ENCODE measurements at regions of chr18 and their contacts with region 1.

Region 1: DNA sequence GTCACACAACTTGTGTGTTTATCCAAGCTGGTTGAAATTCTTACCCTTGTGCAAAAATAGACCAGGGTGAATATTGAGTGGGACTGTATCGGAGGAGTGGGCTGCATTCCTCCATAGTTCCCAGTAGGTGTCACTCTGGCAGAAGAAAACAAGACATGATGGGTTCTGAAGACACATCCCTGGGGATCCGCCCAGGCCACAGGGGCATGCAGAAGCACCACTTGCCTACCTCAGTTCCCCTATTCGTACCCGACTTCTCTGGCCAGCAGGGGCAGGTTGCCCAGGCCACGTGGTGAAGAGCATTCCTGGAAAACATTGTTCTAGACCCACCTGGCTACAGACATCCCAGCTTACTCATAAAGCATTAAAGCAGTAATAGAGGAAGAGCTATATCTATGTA is 168.2 kb downstream of the FAM210A start:
- DNase-seq: no peak
- H3K4me3 Mint-ChIP-seq: no peak overlapping the region
- H3K27ac Mint-ChIP-seq: peak overlapping the region; percentile 27
- H3K4me1 Mint-ChIP-seq: peaks cover 34% of the 10 kb centered on the region
- H3K27me3 Mint-ChIP-seq: no peaks in the 10 kb centered on the region

Region 2: DNA sequence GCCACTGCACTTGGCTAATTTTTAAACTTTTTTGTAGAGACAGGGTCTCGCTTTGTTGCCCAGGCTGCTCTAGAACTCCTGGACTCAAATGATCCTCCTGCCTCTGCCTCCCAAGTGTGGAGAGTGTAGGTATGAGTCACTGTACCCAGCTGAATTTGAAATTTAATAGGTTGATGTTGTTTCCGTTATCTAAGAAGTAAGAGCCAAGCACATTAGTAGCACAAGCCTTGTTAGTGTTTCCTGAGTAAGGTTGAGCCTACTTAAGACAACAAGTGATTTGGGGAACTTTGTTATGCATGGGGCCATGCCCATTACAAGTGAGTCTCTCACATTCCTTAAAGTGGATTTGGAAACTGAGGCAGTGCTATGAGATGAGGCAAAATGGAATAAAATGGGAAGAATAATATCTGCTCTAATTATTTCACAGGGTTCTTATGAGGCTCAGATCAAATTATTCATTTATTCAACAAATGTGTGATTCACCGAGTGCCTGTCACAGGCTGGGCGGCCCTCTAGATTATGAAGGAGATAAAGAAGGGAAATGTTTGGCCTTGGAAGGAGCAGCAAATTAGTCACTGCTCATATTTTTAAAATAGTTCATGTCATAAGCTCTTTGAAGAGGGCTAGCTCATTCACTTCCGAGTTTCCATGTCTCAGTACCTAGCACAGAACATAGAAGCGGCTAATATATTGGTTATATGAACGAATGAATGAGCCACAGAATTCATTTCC is 122.4 kb before region 1 on chr18:
- intact Hi-C with region 1: loop called (anchors 1 kb)
- DNase-seq: no peak
- H3K4me3 Mint-ChIP-seq: no peak overlapping the region
- H3K27ac Mint-ChIP-seq: no peak overlapping the region
- H3K4me1 Mint-ChIP-seq: peaks cover 68% of the 10 kb centered on the region
- H3K27me3 Mint-ChIP-seq: no peaks in the 10 kb centered on the region

Region 3: DNA sequence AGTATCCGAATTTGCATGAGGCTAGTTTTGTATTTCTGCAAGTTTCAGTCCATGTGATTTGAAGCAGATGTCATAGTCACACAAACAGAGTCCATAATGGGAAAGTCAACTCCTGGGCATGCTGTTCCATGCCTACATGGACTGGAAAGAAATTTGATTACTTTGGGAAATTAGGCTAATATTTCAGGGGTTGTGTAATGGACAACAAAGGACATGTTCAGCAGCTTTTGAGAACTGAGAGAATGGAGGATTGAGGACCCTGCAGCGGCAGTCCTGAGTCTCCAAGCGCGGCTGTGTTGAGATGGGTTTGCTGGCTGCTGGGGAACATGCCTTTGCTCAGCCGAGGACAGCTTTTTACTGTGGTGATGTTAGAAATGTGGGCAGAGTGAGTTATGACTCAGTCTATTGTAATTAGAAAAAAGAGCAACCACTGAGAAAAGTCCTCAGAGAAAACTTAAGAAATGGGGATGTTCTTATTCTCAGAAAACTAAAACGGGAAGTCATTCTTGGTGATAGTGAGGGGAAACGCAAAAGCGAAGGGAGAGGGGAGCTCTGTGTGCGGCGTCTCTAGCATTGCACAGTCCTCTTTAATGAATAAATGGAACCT is 19.1 kb after region 1 on chr18:
- intact Hi-C with region 1: loop called (anchors 1 kb)
- DNase-seq: peak; percentile 41
- H3K4me3 Mint-ChIP-seq: peak overlapping the region; percentile 67
- H3K27ac Mint-ChIP-seq: peak overlapping the region; percentile 87
- H3K4me1 Mint-ChIP-seq: peaks cover 56% of the 10 kb centered on the region
- H3K27me3 Mint-ChIP-seq: no peaks in the 10 kb centered on the region

Region 4: DNA sequence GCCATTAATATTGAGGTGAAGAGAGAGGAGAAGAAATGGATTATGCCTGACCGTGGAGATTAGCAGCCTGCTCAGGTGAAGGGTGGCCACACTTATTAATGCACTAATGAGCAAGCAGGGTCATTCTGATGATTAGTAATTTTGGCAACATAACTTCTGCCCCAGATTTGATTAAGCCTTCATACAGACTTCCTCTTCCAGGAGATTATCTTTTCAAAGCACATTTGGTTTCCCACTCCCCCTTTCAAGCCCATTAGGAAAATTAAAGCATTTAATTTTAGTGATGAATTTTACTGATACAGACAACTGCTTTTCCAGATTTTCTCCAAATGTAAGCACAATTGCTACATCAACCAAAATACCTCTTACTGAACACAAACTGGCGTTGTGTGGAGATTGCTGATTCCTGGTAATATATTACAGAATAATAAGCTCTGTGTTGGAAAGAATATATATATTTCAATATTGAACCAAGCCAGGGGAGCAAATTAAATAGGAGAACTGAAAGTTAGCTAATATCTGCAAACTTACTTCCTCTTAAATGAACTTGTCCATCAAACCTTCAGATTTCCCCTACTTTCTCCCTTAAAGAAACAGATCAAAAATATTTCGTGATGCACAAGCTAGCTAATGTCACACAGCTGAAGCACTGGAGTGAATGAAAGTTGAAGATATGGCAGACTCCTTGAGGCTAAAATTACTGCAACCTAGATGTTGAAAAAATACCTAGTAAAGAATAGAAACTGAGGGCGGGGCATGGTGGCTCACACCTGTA is 27.4 kb after region 1 on chr18:
- intact Hi-C with region 1: loop called (anchors 1 kb)
- DNase-seq: no peak
- H3K4me3 Mint-ChIP-seq: no peak overlapping the region
- H3K27ac Mint-ChIP-seq: no peak overlapping the region
- H3K4me1 Mint-ChIP-seq: peaks cover 55% of the 10 kb centered on the region
- H3K27me3 Mint-ChIP-seq: no peaks in the 10 kb centered on the region

Region 5: GRCh38 chr18:13629841-13630715 is 72.0 kb after region 1 on chr18:
- intact Hi-C with region 1: loop called (anchors 1 kb)
- DNase-seq: no peak
- H3K4me3 Mint-ChIP-seq: no peak overlapping the region
- H3K27ac Mint-ChIP-seq: no peak overlapping the region
- H3K4me1 Mint-ChIP-seq: peaks cover 15% of the 10 kb centered on the region
- H3K27me3 Mint-ChIP-seq: no peaks in the 10 kb centered on the region

Region 6: DNA sequence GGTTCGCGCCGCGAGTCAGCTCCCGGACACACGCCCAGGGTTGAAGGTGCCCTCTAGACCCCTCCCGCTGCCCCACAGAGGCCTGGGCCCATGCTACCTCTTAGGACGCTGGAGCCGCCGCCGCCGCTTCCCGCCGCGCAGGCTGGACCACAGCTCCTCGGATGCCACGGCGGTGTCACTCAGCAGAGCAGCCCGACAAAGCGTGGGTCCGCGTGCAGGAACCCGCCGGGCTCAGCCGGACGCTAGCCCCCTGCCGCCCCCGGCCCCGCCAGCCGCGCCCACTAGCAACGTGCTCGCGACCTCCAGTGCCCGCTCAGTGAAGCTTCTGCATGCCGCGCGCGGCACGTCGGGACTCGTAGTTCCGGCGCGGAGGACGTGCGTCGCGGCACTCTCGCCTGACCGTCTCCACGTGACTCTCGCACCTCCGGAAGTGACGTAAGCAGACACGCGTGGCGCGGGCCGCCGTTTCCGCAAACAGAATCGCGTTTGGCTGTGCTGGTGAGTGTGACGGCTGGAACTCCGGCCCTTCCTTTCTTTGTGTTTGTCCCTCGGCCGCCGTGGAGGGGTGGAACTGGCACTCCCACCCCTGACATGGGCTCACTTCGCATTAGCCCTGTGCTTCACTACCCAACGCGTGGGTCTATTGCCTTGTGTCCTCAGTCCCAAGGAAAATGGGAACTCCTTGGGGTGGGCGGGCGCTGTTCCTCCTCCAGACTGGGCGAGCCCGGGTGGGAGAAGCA is 168.3 kb after region 1 on chr18 and contains the starts of genes FAM210A and RNMT:
- intact Hi-C with region 1: loop called (anchors 1 kb)
- DNase-seq: peak; percentile 94
- H3K4me3 Mint-ChIP-seq: peak within 1 kb of the TSS; percentile 93
- H3K27ac Mint-ChIP-seq: peak within 1 kb of the TSS; percentile 86
- H3K4me1 Mint-ChIP-seq: peaks cover 72% of the 10 kb centered on the region
- H3K27me3 Mint-ChIP-seq: no peaks in the 10 kb centered on the region
- total RNA-seq, gene FAM210A: 27.7 and 29.5 TPM in 2 replicates
- total RNA-seq, gene RNMT: 55.8 and 60.6 TPM in 2 replicates

Region 7: GRCh38 chr18:13813271-13813849 is 255.2 kb after region 1 on chr18:
- intact Hi-C with region 1: loop called (anchors 5 kb)
- DNase-seq: peak; percentile 29
- H3K4me3 Mint-ChIP-seq: no peak overlapping the region
- H3K27ac Mint-ChIP-seq: no peak overlapping the region
- H3K4me1 Mint-ChIP-seq: no peaks in the 10 kb centered on the region
- H3K27me3 Mint-ChIP-seq: peaks cover 4% of the 10 kb centered on the region

Region 8: GRCh38 chr18:13989199-13989598 is 431.1 kb after region 1 on chr18:
- intact Hi-C with region 1: no loop called
- DNase-seq: no peak
- H3K4me3 Mint-ChIP-seq: no peak overlapping the region
- H3K27ac Mint-ChIP-seq: no peak overlapping the region
- H3K4me1 Mint-ChIP-seq: no peaks in the 10 kb centered on the region
- H3K27me3 Mint-ChIP-seq: peaks cover under 1% of the 10 kb centered on the region

Measured in activated T-helper 1 cell treated with anti-CD3 and anti-CD28 coated beads, Interleukin-12 subunit alpha, Interleukin-12 subunit beta, Interleukin-2, Interleukin-4 antibody, amounts not matched to agents 30 ng/mL and 10 ng/mL and 1 ng/mL, durations not matched to agents 14 hours and 24 hours and 36 hours (primary cell).